ENCODE measurements at regions of chr14 and their contacts with region 1.

Region 1: DNA sequence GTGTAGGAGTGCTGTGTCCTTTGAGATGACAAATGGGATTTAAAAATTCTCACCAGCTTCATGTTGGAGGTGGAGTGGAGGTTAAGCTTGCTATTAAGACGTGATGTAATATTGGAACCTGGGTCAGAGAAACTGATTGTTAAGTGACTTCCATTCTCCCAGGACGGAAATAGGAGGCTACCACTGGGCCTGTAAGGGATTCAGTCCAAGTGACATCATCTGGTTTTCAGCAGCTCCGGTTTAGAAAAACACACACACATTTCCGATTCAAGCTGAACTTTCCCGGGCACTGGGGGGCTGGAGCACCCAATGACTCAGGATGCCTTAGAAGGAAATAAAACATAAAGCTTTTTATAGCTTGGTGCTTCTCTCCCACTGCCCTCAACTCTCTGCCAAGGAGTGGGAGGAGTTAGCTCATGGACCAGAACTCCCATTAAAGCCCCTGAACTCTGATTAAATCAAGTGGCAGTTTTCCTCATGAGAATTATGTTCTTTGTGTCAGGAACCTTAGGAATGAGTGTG is 12.4 kb downstream of the CALM1 start:
- DNase-seq: peak in 4 of 5 donors; percentile 67 to 81 (median 77)
- ATAC-seq: peak; percentile 60 to 92 (median 80)
- H3K4me3 ChIP-seq: no peak overlapping the region
- H3K27ac ChIP-seq: peak overlapping the region; percentile 57 to 94 (median 78)
- H3K4me1 ChIP-seq: peaks cover 0 to 39% (median 21%) of the 10 kb centered on the region in 12 donors
- H3K27me3 ChIP-seq: no peaks in the 10 kb centered on the region
- CTCF ChIP-seq: no peak
- POLR2A ChIP-seq: no peak

Region 2: GRCh38 chr14:90256354-90257131 is 152.7 kb before region 1 on chr14 and contains the start of gene PSMC1:
- intact Hi-C with region 1: no loop called
- DNase-seq: peak; percentile 92 to 94 (median 94)
- ATAC-seq: peak; percentile 95 to 99 (median 98)
- H3K4me3 ChIP-seq: peak within 1 kb of the TSS; percentile 80 to 99 (median 95)
- H3K27ac ChIP-seq: peak within 1 kb of the TSS; percentile 34 to 93 (median 86)
- H3K4me1 ChIP-seq: peaks cover 4 to 26% (median 16%) of the 10 kb centered on the region in 12 donors
- H3K27me3 ChIP-seq: peaks cover 0 to 4% (median 0%) of the 10 kb centered on the region in 9 donors
- CTCF ChIP-seq: peak in 2 of 12 donors; percentile 8 to 19
- POLR2A ChIP-seq: peak in 1 of 2 donors; percentile 47
- total RNA-seq, gene PSMC1: 113 to 150 (median 125) TPM

Region 3: DNA sequence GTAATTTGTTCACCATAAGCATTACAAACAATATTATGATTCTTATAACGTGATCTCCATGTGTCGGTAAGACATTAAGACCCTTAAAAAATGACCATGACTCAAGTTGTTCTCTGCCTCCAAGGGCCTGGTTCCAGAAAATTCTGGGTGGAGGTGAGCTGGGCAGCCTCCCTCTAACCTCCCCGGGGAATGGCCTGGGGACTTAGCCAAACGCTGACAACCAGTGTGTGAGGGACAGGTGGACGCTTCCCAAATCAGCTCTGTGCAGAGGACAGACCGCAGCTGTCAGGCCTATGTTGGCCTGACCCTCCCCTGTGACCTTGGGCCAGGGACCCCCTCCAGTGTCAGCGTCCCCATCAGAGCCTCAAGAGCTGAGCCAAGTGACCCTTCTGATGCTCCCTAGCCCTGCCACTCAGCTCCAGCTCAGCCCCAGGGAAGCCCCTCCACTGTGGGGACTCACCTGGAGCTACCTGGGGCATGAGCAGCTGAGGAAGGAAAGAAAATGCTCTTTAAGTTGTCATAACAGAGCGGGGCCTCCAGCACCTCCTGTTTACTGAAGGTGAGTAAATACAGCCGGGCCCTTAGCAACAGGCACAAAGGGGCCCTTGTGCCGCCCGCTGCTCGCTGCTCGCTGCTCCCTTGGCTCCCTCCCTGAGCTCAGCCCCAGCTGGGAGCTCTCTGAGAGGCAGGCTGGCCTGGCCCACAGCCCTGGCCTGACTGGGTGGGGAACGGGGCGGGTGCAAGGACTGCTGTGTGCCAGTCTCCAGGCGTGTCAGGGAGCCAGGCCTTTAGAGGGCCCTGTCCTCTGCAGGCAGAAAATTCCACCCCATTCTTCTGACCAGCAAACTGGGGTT is 104.1 kb after region 1 on chr14:
- intact Hi-C with region 1: loop called in 5 of 10 experiments (anchors 5 to 10 kb)
- DNase-seq: peak; percentile 71 to 93 (median 86)
- ATAC-seq: peak; percentile 93 to 95 (median 93)
- H3K4me3 ChIP-seq: no peak overlapping the region
- H3K27ac ChIP-seq: peak overlapping the region; percentile 27 to 94 (median 80)
- H3K4me1 ChIP-seq: peaks cover 3 to 40% (median 27%) of the 10 kb centered on the region in 12 donors
- H3K27me3 ChIP-seq: no peaks in the 10 kb centered on the region
- CTCF ChIP-seq: peak in 1 of 12 donors; percentile 13
- POLR2A ChIP-seq: no peak

Region 4: DNA sequence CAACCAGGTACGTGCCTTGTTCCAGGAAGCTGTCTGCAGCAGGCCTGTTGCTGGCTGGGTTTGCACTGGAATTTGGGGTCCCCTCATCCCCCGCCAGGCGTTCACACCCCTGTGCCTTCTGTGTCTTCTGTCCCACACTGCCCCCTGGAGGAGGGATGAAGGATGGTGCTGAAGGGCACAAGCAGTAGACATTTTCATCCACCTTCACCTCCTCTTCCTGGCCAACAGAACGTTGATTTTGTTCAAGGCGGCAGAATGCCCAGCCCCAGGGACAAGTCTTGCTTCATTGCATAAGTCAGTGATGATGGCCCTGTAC is 109.6 kb after region 1 on chr14:
- intact Hi-C with region 1: loop called in 7 of 10 experiments (anchors 5 to 10 kb)
- DNase-seq: peak in 3 of 5 donors; percentile 25 to 48 (median 26)
- ATAC-seq: no peak
- H3K4me3 ChIP-seq: no peak overlapping the region
- H3K27ac ChIP-seq: peak overlapping the region in 2 of 12 donors; percentile 8 to 83
- H3K4me1 ChIP-seq: peaks cover 0 to 66% (median 39%) of the 10 kb centered on the region in 12 donors
- H3K27me3 ChIP-seq: no peaks in the 10 kb centered on the region
- CTCF ChIP-seq: peak; percentile 32 to 64 (median 40)
- POLR2A ChIP-seq: no peak